CD4-positive, alpha-beta memory T cell (primary cell): ENCODE measurements at regions of chr15 and their contacts with region 1.

Region 1: GRCh38 chr15:48285329-48286214 is 45.7 kb upstream of the DUT start:
- DNase-seq: peak in 4 of 5 donors; percentile 35 to 51 (median 40)
- H3K4me3 ChIP-seq: no peak overlapping the region
- H3K4me3 Mint-ChIP-seq: peak overlapping the region in 4 of 8 donors; percentile 1 to 70 (median 24)
- H3K27ac ChIP-seq: no peak overlapping the region
- H3K27ac Mint-ChIP-seq: no peak overlapping the region
- H3K4me1 ChIP-seq: peaks cover 4% of the 10 kb centered on the region
- H3K4me1 Mint-ChIP-seq: peaks cover 4 to 12% (median 5%) of the 10 kb centered on the region in 4 donors
- H3K27me3 ChIP-seq: no peaks in the 10 kb centered on the region
- H3K27me3 Mint-ChIP-seq: peaks cover 0 to 2% of the 10 kb centered on the region in 2 donors

Region 2: GRCh38 chr15:47196057-47196456 is 1089.5 kb before region 1 on chr15:
- CTCF ChIA-PET with region 1: interaction called, 17 read pairs
- POLR2A ChIA-PET with region 1: no interaction called
- intact Hi-C with region 1: no loop called
- DNase-seq: peak; percentile 3 to 37 (median 8)
- H3K4me3 ChIP-seq: no peak overlapping the region
- H3K4me3 Mint-ChIP-seq: no peak overlapping the region
- H3K27ac ChIP-seq: no peak overlapping the region
- H3K27ac Mint-ChIP-seq: no peak overlapping the region
- H3K4me1 ChIP-seq: no peaks in the 10 kb centered on the region
- H3K4me1 Mint-ChIP-seq: no peaks in the 10 kb centered on the region
- H3K27me3 ChIP-seq: no peaks in the 10 kb centered on the region
- H3K27me3 Mint-ChIP-seq: no peaks in the 10 kb centered on the region

Region 3: GRCh38 chr15:47787875-47788274 is 497.7 kb before region 1 on chr15:
- CTCF ChIA-PET with region 1: no interaction called
- POLR2A ChIA-PET with region 1: no interaction called
- intact Hi-C with region 1: no loop called
- DNase-seq: no peak
- H3K4me3 ChIP-seq: no peak overlapping the region
- H3K4me3 Mint-ChIP-seq: no peak overlapping the region
- H3K27ac ChIP-seq: no peak overlapping the region
- H3K27ac Mint-ChIP-seq: no peak overlapping the region
- H3K4me1 ChIP-seq: no peaks in the 10 kb centered on the region
- H3K4me1 Mint-ChIP-seq: no peaks in the 10 kb centered on the region
- H3K27me3 ChIP-seq: no peaks in the 10 kb centered on the region
- H3K27me3 Mint-ChIP-seq: no peaks in the 10 kb centered on the region

Region 4: GRCh38 chr15:48298914-48299313 is 13.3 kb after region 1 on chr15:
- CTCF ChIA-PET with region 1: interaction called, 58 read pairs
- POLR2A ChIA-PET with region 1: no interaction called
- intact Hi-C with region 1: no loop called
- DNase-seq: no peak
- H3K4me3 ChIP-seq: no peak overlapping the region
- H3K4me3 Mint-ChIP-seq: no peak overlapping the region
- H3K27ac ChIP-seq: no peak overlapping the region
- H3K27ac Mint-ChIP-seq: no peak overlapping the region
- H3K4me1 ChIP-seq: no peaks in the 10 kb centered on the region
- H3K4me1 Mint-ChIP-seq: no peaks in the 10 kb centered on the region
- H3K27me3 ChIP-seq: no peaks in the 10 kb centered on the region
- H3K27me3 Mint-ChIP-seq: peaks cover 0 to 3% of the 10 kb centered on the region in 2 donors

Region 5: GRCh38 chr15:48352474-48353072 is 67.0 kb after region 1 on chr15:
- CTCF ChIA-PET with region 1: interaction called, 13 read pairs
- POLR2A ChIA-PET with region 1: no interaction called
- intact Hi-C with region 1: loop called (anchors 2 kb)
- DNase-seq: peak; percentile 42 to 55 (median 49)
- H3K4me3 ChIP-seq: no peak overlapping the region
- H3K4me3 Mint-ChIP-seq: peak overlapping the region in 2 of 8 donors; percentile 40 to 53
- H3K27ac ChIP-seq: no peak overlapping the region
- H3K27ac Mint-ChIP-seq: no peak overlapping the region
- H3K4me1 ChIP-seq: no peaks in the 10 kb centered on the region
- H3K4me1 Mint-ChIP-seq: peaks cover 0 to 5% (median 2%) of the 10 kb centered on the region in 4 donors
- H3K27me3 ChIP-seq: no peaks in the 10 kb centered on the region
- H3K27me3 Mint-ChIP-seq: peaks cover 3 to 7% of the 10 kb centered on the region in 2 donors

Region 6: GRCh38 chr15:50145451-50145872 is 1859.9 kb after region 1 on chr15:
- CTCF ChIA-PET with region 1: no interaction called
- POLR2A ChIA-PET with region 1: no interaction called
- intact Hi-C with region 1: loop called (anchors 10 kb)
- DNase-seq: peak in 4 of 5 donors; percentile 28 to 50 (median 34)
- H3K4me3 ChIP-seq: no peak overlapping the region
- H3K4me3 Mint-ChIP-seq: no peak overlapping the region
- H3K27ac ChIP-seq: no peak overlapping the region
- H3K27ac Mint-ChIP-seq: no peak overlapping the region
- H3K4me1 ChIP-seq: no peaks in the 10 kb centered on the region
- H3K4me1 Mint-ChIP-seq: no peaks in the 10 kb centered on the region
- H3K27me3 ChIP-seq: no peaks in the 10 kb centered on the region
- H3K27me3 Mint-ChIP-seq: no peaks in the 10 kb centered on the region